Ovary (tissue), 10 donors: ENCODE measurements at regions of chr2 and their contacts with region 1.

Region 1: GRCh38 chr2:42060718-42061619 is 13.1 kb downstream of the PKDCC start:
- DNase-seq: peak; percentile 71 to 79 (median 73)
- H3K4me3 ChIP-seq: no peak overlapping the region
- H3K27ac ChIP-seq: peak overlapping the region; percentile 33 to 58
- H3K4me1 ChIP-seq: peaks cover 19% of the 10 kb centered on the region
- H3K27me3 ChIP-seq: no peaks in the 10 kb centered on the region
- CTCF ChIP-seq: no peak
- EP300 ChIP-seq: no peak
- POLR2A ChIP-seq: no peak

Region 2: GRCh38 chr2:41241325-41242000 is 819.5 kb before region 1 on chr2:
- intact Hi-C with region 1: no loop called
- DNase-seq: no peak
- H3K4me3 ChIP-seq: no peak overlapping the region
- H3K27ac ChIP-seq: no peak overlapping the region
- H3K4me1 ChIP-seq: peaks cover 2% of the 10 kb centered on the region
- H3K27me3 ChIP-seq: no peaks in the 10 kb centered on the region
- CTCF ChIP-seq: no peak
- EP300 ChIP-seq: no peak
- POLR2A ChIP-seq: no peak

Region 3: DNA sequence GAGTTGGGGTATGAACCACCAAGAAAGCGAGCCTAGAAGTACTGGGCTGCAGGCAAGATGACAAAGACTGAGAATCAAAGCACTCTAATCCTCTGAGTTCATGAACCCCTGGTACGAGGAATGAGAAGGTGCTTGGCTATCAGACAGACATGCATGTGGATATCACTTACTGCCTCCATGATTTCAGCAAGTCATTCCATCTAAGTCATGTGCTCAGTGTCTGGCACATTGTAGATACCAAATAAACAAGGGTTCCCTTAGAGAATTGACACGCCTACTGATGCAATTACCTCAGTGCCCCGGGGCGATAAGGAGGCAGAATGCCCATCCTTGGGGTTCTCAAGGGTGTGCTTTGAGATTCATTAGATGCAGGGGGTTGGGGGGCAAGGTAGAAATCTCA is 138.8 kb before region 1 on chr2:
- intact Hi-C with region 1: no loop called
- DNase-seq: no peak
- H3K4me3 ChIP-seq: no peak overlapping the region
- H3K27ac ChIP-seq: no peak overlapping the region
- H3K4me1 ChIP-seq: peaks cover 9% of the 10 kb centered on the region
- H3K27me3 ChIP-seq: no peaks in the 10 kb centered on the region
- CTCF ChIP-seq: no peak
- EP300 ChIP-seq: no peak
- POLR2A ChIP-seq: no peak

Region 4: DNA sequence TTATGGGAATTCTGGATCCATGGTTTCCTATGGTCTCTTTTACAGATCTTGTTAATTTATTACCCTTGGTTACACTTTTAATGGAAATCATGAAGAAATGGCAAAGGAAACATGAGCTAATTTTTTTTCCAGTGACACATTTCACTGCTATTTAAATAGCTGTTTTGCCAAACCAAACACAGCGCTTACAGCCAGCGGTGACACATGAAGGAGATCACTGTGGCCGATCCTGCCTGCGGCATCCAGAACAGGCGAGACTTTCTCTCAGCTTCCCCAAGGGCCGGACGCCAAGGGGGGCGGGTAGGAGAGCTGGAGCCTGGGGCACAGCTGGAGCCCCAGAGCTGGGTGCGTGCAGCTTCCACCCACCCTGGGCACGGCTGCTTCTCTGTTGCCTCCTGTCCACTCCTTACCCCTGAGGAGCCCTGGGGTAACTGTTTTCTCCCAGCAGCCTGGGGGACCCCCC is 94.5 kb before region 1 on chr2:
- intact Hi-C with region 1: loop called in 2 of 4 experiments (anchors 5 to 10 kb)
- DNase-seq: peak; percentile 75 to 84 (median 83)
- H3K4me3 ChIP-seq: no peak overlapping the region
- H3K27ac ChIP-seq: peak overlapping the region in 1 of 2 donors; percentile 86
- H3K4me1 ChIP-seq: peaks cover 36% of the 10 kb centered on the region
- H3K27me3 ChIP-seq: no peaks in the 10 kb centered on the region
- CTCF ChIP-seq: no peak
- EP300 ChIP-seq: no peak
- POLR2A ChIP-seq: no peak

Region 5: GRCh38 chr2:42153944-42154581 is 93.1 kb after region 1 on chr2:
- intact Hi-C with region 1: no loop called
- DNase-seq: no peak
- H3K4me3 ChIP-seq: no peak overlapping the region
- H3K27ac ChIP-seq: no peak overlapping the region
- H3K4me1 ChIP-seq: peaks cover 2% of the 10 kb centered on the region
- H3K27me3 ChIP-seq: no peaks in the 10 kb centered on the region
- CTCF ChIP-seq: no peak
- EP300 ChIP-seq: no peak
- POLR2A ChIP-seq: no peak